AG04450 (cell line): ENCODE measurements at regions of chr1 and their contacts with region 1.

Region 1: GRCh38 chr1:183598386-183598785 is 8.1 kb upstream of the NCF2 start:
- DNase-seq: no peak
- H3K4me3 ChIP-seq: no peak overlapping the region
- H3K27ac ChIP-seq: no peak overlapping the region
- H3K27me3 ChIP-seq: no peaks in the 10 kb centered on the region
- CTCF ChIP-seq: no peak

Region 2: DNA sequence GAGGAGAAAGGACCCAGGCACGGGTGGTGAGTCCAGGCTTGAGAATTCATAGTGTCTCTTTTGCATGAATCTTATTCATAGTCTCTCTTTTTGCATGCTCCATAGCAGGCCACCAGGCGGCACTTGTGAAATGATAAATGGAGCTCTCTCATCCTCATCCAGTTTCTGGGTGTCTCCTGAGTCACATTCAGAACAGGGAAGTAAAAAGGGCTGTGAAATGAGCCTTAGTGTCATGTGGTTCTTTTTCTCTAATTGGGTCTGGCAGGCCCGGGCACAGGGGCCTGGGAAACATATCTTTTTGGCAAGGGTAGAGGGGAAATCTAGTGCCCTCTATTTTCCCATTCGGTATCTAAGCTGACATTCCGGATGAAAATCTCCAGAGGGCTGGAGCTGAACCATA is 10.9 kb after region 1 on chr1:
- CTCF ChIA-PET with region 1: interaction called, 10 read pairs
- POLR2A ChIA-PET with region 1: no interaction called
- DNase-seq: no peak
- H3K4me3 ChIP-seq: no peak overlapping the region
- H3K27ac ChIP-seq: peak overlapping the region; percentile 83
- H3K27me3 ChIP-seq: no peaks in the 10 kb centered on the region
- CTCF ChIP-seq: peak; percentile 66